ENCODE measurements at regions of chr14 and their contacts with region 1.

Region 1: GRCh38 chr14:87745507-87746118 is 247.4 kb downstream of the GALC start:
- DNase-seq: no peak
- ATAC-seq: no peak
- H3K4me3 Mint-ChIP-seq: no peak overlapping the region
- H3K27ac Mint-ChIP-seq: no peak overlapping the region
- H3K4me1 Mint-ChIP-seq: no peaks in the 10 kb centered on the region
- H3K27me3 Mint-ChIP-seq: peaks cover 5% of the 10 kb centered on the region

Region 2: GRCh38 chr14:87691042-87691881 is 54.4 kb before region 1 on chr14:
- CTCF ChIA-PET with region 1: no interaction called
- DNase-seq: no peak
- ATAC-seq: no peak
- H3K4me3 Mint-ChIP-seq: no peak overlapping the region
- H3K27ac Mint-ChIP-seq: no peak overlapping the region
- H3K4me1 Mint-ChIP-seq: no peaks in the 10 kb centered on the region
- H3K27me3 Mint-ChIP-seq: no peaks in the 10 kb centered on the region

Region 3: GRCh38 chr14:87732562-87732961 is 13.1 kb before region 1 on chr14:
- CTCF ChIA-PET with region 1: interaction called, 11 read pairs
- DNase-seq: no peak
- ATAC-seq: no peak
- H3K4me3 Mint-ChIP-seq: no peak overlapping the region
- H3K27ac Mint-ChIP-seq: no peak overlapping the region
- H3K4me1 Mint-ChIP-seq: no peaks in the 10 kb centered on the region
- H3K27me3 Mint-ChIP-seq: no peaks in the 10 kb centered on the region

Measured in activated CD8-positive, alpha-beta memory T cell treated with anti-CD3 and anti-CD28 coated beads, Interleukin-2, amount 10 ng/mL, durations not matched to agents 7 days and 5 days (primary cell).